ENCODE measurements at regions of chr4 and their contacts with region 1.

Region 1: DNA sequence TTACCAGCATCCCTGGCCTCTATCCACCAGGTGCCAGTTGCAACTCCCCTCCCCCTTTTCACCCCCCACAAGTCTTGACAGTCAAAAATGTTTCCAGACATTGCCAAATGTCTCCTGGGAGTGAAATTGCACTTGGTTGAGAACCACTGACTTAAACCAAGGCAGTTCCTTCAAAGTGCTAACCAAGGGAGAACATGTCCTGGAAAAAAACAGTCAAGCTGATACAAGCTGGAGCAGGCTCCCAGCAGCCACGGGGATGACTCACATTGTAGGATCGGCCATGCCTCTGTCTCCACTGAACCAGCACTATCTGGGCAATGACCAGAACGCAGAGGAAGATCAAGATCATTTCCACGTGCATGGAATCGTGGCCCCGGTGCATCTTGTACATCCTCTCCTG is 11.4 kb downstream of the RNF175 start:
- DNase-seq: peak; percentile 90

Region 2: DNA sequence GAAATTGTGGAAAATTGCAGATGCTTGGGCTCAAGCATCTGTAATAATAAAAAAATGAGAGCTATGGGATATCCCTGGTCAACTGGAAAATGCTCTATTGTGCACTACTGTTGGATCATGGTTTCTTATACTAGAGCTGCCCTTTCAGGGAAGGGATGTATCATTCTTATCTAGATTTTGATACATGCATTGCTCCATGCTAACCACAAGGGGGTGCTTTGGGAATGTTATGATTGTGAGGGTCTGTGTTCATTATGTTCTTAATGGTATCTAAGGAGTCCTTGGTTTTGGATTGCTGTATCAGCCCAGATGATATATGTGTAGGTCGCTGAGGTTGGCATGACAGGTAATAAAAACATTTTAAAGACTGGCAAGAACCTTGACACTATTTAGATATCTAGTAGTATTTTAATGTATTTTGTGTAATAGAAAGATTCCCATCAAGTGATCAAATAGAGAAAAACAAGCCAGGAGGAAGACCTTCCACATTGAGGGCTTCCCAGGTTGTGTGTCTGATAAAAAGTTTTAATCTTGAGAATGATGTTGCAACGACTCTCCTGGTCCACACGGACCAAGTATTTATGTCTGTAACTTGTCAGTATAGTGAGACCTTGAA is 113.5 kb before region 1 on chr4:
- intact Hi-C with region 1: loop called (anchors 5 to 10 kb)
- DNase-seq: no peak

Region 3: GRCh38 chr4:153643406-153644383 is 104.7 kb before region 1 on chr4:
- intact Hi-C with region 1: loop called (anchors 5 to 10 kb)
- DNase-seq: no peak

Region 4: GRCh38 chr4:153705743-153706468 is 42.5 kb before region 1 on chr4:
- intact Hi-C with region 1: no loop called
- DNase-seq: no peak

Region 5: DNA sequence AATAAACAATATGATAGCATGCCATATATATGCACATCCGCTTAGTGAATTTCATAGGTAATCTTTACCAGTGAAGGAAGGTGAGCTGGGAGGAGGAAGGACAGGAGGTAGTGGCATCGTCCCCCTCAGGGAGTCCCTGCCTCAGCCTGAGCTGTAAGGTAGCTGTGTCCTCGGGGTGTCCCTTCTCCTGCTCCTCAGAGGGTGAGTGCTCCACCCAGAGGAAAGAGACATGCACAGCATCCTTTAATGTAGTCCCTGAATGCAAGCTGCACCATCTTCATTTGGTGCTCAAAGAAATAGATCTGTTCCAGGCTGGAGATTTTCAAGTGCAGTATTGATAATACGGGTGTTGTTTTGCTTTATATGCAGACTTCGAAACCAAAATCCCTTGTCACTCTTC is 370.9 kb after region 1 on chr4:
- intact Hi-C with region 1: no loop called
- DNase-seq: no peak

Region 6: GRCh38 chr4:154634058-154634457 is 885.7 kb after region 1 on chr4:
- intact Hi-C with region 1: no loop called
- DNase-seq: no peak